ENCODE measurements at regions of chr21 and their contacts with region 1.

Region 1: GRCh38 chr21:45140346-45140940 is 66.1 kb downstream of the ADARB1 start:
- DNase-seq: peak; percentile 90
- H3K4me3 ChIP-seq: no peak overlapping the region; a peak in 1 of 4 replicates
- H3K27ac ChIP-seq: no peak overlapping the region
- H3K4me1 ChIP-seq: peaks cover 6 to 9% of the 10 kb centered on the region in 2 experiments; a peak in 3 of 4 replicates
- H3K27me3 ChIP-seq: no peaks in the 10 kb centered on the region
- CTCF ChIP-seq: peak; percentile 91
- EP300 ChIP-seq: no peak
- RAD21 ChIP-seq: peak; percentile 99

Region 2: GRCh38 chr21:44927587-44928461 is 212.6 kb before region 1 on chr21:
- CTCF ChIA-PET with region 1: interaction called, 30 read pairs
- POLR2A ChIA-PET with region 1: no interaction called
- DNase-seq: no peak
- H3K4me3 ChIP-seq: peak overlapping the region in 1 of 2 experiments; percentile 35; a peak in 2 of 4 replicates
- H3K27ac ChIP-seq: peak overlapping the region in 1 of 2 experiments; percentile 35; a peak in 1 of 4 replicates
- H3K4me1 ChIP-seq: peaks cover 16 to 32% of the 10 kb centered on the region in 2 experiments; a peak in 2 of 4 replicates
- H3K27me3 ChIP-seq: peaks cover 27% of the 10 kb centered on the region
- CTCF ChIP-seq: peak; percentile 16; the same call in 1 of the 2 replicates
- EP300 ChIP-seq: 0 out of 4 replicates have a peak, but pooled peaks of 1 of the 2 experiments have one; percentile 6
- RAD21 ChIP-seq: no peak

Region 3: DNA sequence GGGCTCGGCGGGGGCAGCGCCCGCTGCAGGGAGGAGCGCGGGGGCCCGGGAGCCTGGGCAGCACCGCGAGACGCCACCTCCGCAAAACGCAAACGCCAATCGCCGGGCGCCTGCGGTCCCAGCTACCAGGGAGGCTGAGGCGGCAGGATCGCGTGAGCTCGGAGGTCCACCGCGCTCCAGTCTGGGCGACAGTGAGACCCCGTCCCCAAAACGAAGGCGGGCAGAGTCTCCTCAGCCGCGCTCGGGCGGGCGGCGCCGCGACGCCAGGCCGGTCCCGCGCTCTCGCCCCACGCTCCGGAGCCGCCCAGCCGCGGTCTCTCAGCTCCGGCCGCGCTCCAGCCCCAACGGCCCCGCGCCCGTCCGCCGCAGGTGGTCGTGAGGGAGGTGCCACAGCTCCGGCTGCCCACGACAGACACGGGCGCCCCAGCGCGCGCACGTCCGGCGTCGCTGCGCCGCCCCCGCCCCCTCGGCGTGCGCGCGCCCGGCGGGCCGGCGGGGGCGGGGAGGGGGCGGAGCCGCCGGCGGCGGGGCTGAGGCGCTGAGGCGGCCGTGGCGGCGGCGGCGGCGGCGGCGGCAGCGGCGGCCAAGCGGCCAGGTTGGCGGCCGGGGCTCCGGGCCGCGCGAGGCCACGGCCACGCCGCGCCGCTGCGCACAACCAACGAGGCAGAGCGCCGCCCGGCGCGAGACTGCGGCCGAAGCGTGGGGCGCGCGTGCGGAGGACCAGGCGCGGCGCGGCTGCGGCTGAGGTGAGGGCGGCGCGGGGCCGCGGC is 66.2 kb before region 1 on chr21 and contains the start of gene ADARB1:
- CTCF ChIA-PET with region 1: interaction called, 30 read pairs
- POLR2A ChIA-PET with region 1: no interaction called
- DNase-seq: peak; percentile 98
- H3K4me3 ChIP-seq: peak within 1 kb of the TSS; percentile 80 to 93
- H3K27ac ChIP-seq: peak within 1 kb of the TSS; percentile 52 to 86; a peak in 3 of 4 replicates
- H3K4me1 ChIP-seq: peaks cover 10 to 25% of the 10 kb centered on the region in 2 experiments; a peak in 3 of 4 replicates
- H3K27me3 ChIP-seq: no peaks in the 10 kb centered on the region
- CTCF ChIP-seq: no peak
- EP300 ChIP-seq: no peak
- RAD21 ChIP-seq: no peak
- polyA plus RNA-seq, gene ADARB1: 7.6 and 7.8 TPM in 2 replicates

Region 4: GRCh38 chr21:45152265-45152746 is 11.9 kb after region 1 on chr21:
- CTCF ChIA-PET with region 1: interaction called, 159 read pairs
- POLR2A ChIA-PET with region 1: no interaction called
- DNase-seq: no peak
- H3K4me3 ChIP-seq: no peak overlapping the region
- H3K27ac ChIP-seq: peak overlapping the region in 1 of 2 experiments; percentile 99; a peak in 2 of 4 replicates
- H3K4me1 ChIP-seq: peaks cover 19 to 70% of the 10 kb centered on the region in 2 experiments
- H3K27me3 ChIP-seq: no peaks in the 10 kb centered on the region
- CTCF ChIP-seq: no peak
- EP300 ChIP-seq: no peak
- RAD21 ChIP-seq: peak; percentile 36

Region 5: DNA sequence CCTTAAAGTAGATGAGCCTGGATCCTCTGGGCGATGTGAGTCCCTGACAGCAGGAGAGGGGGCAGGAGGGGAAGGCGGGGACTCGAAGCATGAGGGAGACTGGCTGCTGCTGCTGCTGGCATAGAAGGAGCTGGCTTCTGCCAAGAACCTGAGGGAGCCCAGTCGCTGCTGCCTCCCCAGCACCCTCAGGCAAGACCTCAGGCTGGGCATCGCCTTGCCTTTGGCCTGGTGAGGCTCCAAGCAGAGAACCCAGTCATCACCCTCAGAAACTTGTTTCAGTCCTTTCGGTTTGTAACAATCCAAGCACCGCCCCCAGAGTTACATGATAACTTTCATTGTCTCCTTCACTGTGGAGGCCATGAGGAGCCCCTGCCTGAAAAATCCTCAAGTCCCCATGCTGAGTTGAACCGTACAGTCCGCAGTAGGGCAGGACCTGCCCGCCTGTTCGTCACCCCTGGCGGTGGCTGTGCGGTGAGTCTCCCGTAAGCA is 108.5 kb after region 1 on chr21:
- CTCF ChIA-PET with region 1: interaction called, 21 read pairs
- POLR2A ChIA-PET with region 1: no interaction called
- DNase-seq: peak; percentile 71
- H3K4me3 ChIP-seq: peak overlapping the region; percentile 6 to 43; a peak in 3 of 4 replicates
- H3K27ac ChIP-seq: no peak overlapping the region
- H3K4me1 ChIP-seq: peaks cover 0 to 18% of the 10 kb centered on the region in 2 experiments; a peak in 1 of 4 replicates
- H3K27me3 ChIP-seq: no peaks in the 10 kb centered on the region
- CTCF ChIP-seq: no peak
- EP300 ChIP-seq: no peak
- RAD21 ChIP-seq: no peak

Region 6: GRCh38 chr21:45299864-45300785 is 159.7 kb after region 1 on chr21:
- CTCF ChIA-PET with region 1: interaction called, 271 read pairs
- POLR2A ChIA-PET with region 1: no interaction called
- DNase-seq: no peak
- H3K4me3 ChIP-seq: no peak overlapping the region
- H3K27ac ChIP-seq: peak overlapping the region in 1 of 2 experiments; percentile 75; a peak in 2 of 4 replicates
- H3K4me1 ChIP-seq: peaks cover 6 to 13% of the 10 kb centered on the region in 2 experiments; a peak in 1 of 4 replicates
- H3K27me3 ChIP-seq: no peaks in the 10 kb centered on the region
- CTCF ChIP-seq: no peak
- EP300 ChIP-seq: no peak
- RAD21 ChIP-seq: no peak

Region 7: GRCh38 chr21:45366931-45367401 is 226.5 kb after region 1 on chr21:
- CTCF ChIA-PET with region 1: no interaction called
- POLR2A ChIA-PET with region 1: no interaction called
- DNase-seq: peak; percentile 79
- H3K4me3 ChIP-seq: no peak overlapping the region
- H3K27ac ChIP-seq: peak overlapping the region; percentile 77 to 100
- H3K4me1 ChIP-seq: peaks cover 19 to 30% of the 10 kb centered on the region in 2 experiments; a peak in 3 of 4 replicates
- H3K27me3 ChIP-seq: no peaks in the 10 kb centered on the region
- CTCF ChIP-seq: peak; percentile 32
- EP300 ChIP-seq: peak; percentile 26 to 90; a peak in 1 of 4 replicates
- RAD21 ChIP-seq: peak; percentile 1; the same call in 1 of the 2 replicates

Region 8: DNA sequence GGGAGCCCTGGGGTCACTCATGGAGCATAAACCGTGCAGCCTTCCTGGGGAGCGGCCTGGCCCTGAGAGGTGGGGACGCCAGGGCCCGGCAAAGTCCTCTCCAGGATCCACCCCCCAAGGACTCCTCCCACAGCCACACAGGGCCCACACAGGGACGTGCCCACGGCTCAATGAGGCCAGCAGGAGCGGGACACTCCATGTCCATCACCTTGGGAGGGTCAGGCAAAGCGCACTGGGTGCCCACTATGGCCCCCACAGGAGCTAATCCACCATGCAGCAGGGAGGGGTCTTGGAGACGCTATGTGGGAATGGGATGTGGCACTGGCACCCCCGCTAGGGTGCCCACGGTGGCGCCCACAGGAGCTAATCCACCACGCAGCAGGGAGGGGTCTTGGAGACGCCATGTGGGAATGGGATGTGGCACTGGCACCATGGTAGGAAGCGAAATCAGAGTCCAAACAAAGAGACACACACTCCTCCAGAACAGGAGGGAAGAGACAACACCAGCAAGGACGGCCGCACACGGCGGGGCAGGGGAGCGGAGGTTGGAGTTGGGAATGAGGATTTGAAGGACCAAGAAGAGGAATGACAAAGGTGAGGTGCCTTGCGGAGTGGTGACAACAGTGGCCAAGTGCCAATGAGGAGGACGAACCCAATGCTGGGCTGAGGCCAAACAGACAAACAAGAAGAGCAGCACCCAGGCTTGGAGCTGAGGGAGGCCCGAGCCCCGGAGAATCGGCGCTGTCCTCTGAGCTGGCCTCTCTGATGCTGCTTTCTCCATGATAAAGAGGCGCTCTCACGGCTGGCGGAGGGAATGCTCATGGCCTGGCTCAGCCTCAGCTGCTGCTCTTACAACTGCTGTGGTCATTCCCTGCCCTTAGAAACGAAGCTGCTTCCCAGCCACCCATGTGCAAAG is 419.9 kb after region 1 on chr21:
- CTCF ChIA-PET with region 1: no interaction called
- POLR2A ChIA-PET with region 1: no interaction called
- DNase-seq: no peak
- H3K4me3 ChIP-seq: no peak overlapping the region
- H3K27ac ChIP-seq: no peak overlapping the region
- H3K4me1 ChIP-seq: peaks cover 0 to 18% of the 10 kb centered on the region in 2 experiments; a peak in 1 of 4 replicates
- H3K27me3 ChIP-seq: no peaks in the 10 kb centered on the region
- CTCF ChIP-seq: no peak
- EP300 ChIP-seq: no peak
- RAD21 ChIP-seq: no peak

Measured in SK-N-SH (cell line).